ENCODE measurements at regions of chr7 and their contacts with region 1.

Region 1: DNA sequence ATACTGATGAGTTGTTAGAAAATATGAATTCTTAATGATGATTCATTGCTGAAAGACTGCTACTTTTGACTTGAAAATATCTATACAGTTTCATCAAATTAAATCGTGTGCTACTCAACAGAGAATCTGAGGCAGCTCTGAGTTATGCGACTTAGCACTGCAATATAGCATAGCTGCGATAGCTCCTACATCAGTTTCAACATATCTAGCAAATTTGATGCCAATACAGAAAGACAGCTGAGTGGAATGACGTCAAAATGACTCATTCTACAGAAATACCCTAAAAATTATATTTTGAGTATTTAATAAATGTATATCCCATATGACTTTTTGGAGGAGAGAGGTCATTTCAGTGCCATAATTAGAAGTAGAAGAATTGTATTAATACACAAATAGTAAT is 1.1 kb upstream of the TARP start:
- DNase-seq: no peak
- ATAC-seq: no peak
- H3K4me3 Mint-ChIP-seq: no peak overlapping the region
- H3K27ac Mint-ChIP-seq: no peak overlapping the region
- H3K4me1 Mint-ChIP-seq: no peaks in the 10 kb centered on the region
- H3K27me3 Mint-ChIP-seq: no peaks in the 10 kb centered on the region

Region 2: GRCh38 chr7:38215735-38216670 is 58.5 kb before region 1 on chr7:
- CTCF ChIA-PET with region 1: no interaction called
- POLR2A ChIA-PET with region 1: no interaction called
- intact Hi-C with region 1: no loop called
- DNase-seq: peak; percentile 86
- ATAC-seq: peak; percentile 87
- H3K4me3 Mint-ChIP-seq: no peak overlapping the region
- H3K27ac Mint-ChIP-seq: peak overlapping the region; percentile 7
- H3K4me1 Mint-ChIP-seq: peaks cover 31% of the 10 kb centered on the region
- H3K27me3 Mint-ChIP-seq: no peaks in the 10 kb centered on the region

Region 3: DNA sequence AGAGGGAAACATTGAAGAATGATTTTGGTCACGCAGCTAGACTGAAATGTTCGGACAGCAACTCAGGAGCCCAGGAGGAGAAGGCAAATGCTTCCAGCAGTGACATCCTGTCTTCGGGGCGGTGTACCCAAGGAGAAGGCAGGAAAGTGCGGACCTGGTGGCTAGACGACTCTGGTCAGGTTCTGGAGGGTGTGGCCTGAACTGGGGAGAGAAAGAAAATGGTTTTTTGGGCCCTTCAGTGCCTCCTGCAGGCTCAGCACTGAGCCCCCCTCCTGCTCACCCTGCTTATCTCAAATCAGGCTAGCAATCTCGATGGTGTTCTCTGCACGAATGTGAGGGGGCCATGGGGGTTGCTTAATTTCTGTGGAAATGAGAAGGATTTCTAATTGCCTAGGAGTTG is 25.7 kb after region 1 on chr7:
- CTCF ChIA-PET with region 1: no interaction called
- POLR2A ChIA-PET with region 1: no interaction called
- intact Hi-C with region 1: loop called in 1 of 2 experiments (anchors 2 kb)
- DNase-seq: peak; percentile 15
- ATAC-seq: peak; percentile 55
- H3K4me3 Mint-ChIP-seq: peak overlapping the region; percentile 70
- H3K27ac Mint-ChIP-seq: peak overlapping the region; percentile 69
- H3K4me1 Mint-ChIP-seq: peaks cover 4% of the 10 kb centered on the region
- H3K27me3 Mint-ChIP-seq: no peaks in the 10 kb centered on the region

Region 4: DNA sequence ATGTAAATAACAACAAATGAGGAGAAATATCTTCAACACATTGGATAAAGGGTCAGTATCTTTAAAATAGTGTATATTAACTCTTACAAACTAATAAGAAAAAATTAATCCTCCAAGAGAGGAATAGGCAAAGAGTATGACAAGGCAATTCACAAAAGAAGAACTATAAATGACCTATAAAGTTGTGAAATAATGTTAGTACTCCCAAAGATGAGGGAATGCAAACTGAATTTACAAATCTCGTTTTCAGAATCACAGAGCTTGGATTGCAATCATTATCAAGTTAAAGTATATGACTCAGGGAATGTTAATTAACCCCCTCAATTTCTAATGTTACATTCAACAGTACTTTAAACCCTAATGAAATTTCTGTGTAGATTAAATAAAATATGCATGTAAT is 86.3 kb after region 1 on chr7:
- CTCF ChIA-PET with region 1: no interaction called
- POLR2A ChIA-PET with region 1: no interaction called
- intact Hi-C with region 1: loop called in 1 of 2 experiments (anchors 5 kb)
- DNase-seq: no peak
- ATAC-seq: no peak
- H3K4me3 Mint-ChIP-seq: peak overlapping the region; percentile 79
- H3K27ac Mint-ChIP-seq: peak overlapping the region; percentile 98
- H3K4me1 Mint-ChIP-seq: peaks cover 55% of the 10 kb centered on the region
- H3K27me3 Mint-ChIP-seq: no peaks in the 10 kb centered on the region

Region 5: GRCh38 chr7:38411404-38411803 is 136.9 kb after region 1 on chr7:
- CTCF ChIA-PET with region 1: no interaction called
- POLR2A ChIA-PET with region 1: no interaction called
- intact Hi-C with region 1: no loop called
- DNase-seq: no peak
- ATAC-seq: no peak
- H3K4me3 Mint-ChIP-seq: no peak overlapping the region
- H3K27ac Mint-ChIP-seq: no peak overlapping the region
- H3K4me1 Mint-ChIP-seq: peaks cover 17% of the 10 kb centered on the region
- H3K27me3 Mint-ChIP-seq: peaks cover 2% of the 10 kb centered on the region